ENCODE measurements at regions of chr1 and their contacts with region 1.

Region 1: GRCh38 chr1:111755331-111756123 is at the start of gene DDX20:
- DNase-seq: peak; percentile 92 to 93
- ATAC-seq: peak; percentile 97 to 99 (median 98)
- H3K4me3 ChIP-seq: peak within 1 kb of the TSS; percentile 58 to 90 (median 80)
- H3K27ac ChIP-seq: peak within 1 kb of the TSS; percentile 73 to 96 (median 92)
- H3K4me1 ChIP-seq: peaks cover 0 to 47% (median 21%) of the 10 kb centered on the region in 9 donors
- H3K27me3 ChIP-seq: no peaks in the 10 kb centered on the region
- CTCF ChIP-seq: peak; percentile 81 to 99 (median 95)
- total RNA-seq, gene DDX20: 5.0 to 10.0 (median 6.5) TPM

Region 2: GRCh38 chr1:111489604-111490003 is 265.9 kb before region 1 on chr1:
- intact Hi-C with region 1: loop called in 5 of 10 experiments (anchors 5 to 10 kb)
- DNase-seq: no peak
- ATAC-seq: peak; percentile 23 to 91 (median 68)
- H3K4me3 ChIP-seq: no peak overlapping the region
- H3K27ac ChIP-seq: peak overlapping the region in 3 of 10 donors; percentile 10 to 83 (median 36)
- H3K4me1 ChIP-seq: peaks cover 0 to 62% (median 0%) of the 10 kb centered on the region in 9 donors
- H3K27me3 ChIP-seq: peaks cover 0 to 7% (median 0%) of the 10 kb centered on the region in 7 donors
- CTCF ChIP-seq: no peak

Region 3: DNA sequence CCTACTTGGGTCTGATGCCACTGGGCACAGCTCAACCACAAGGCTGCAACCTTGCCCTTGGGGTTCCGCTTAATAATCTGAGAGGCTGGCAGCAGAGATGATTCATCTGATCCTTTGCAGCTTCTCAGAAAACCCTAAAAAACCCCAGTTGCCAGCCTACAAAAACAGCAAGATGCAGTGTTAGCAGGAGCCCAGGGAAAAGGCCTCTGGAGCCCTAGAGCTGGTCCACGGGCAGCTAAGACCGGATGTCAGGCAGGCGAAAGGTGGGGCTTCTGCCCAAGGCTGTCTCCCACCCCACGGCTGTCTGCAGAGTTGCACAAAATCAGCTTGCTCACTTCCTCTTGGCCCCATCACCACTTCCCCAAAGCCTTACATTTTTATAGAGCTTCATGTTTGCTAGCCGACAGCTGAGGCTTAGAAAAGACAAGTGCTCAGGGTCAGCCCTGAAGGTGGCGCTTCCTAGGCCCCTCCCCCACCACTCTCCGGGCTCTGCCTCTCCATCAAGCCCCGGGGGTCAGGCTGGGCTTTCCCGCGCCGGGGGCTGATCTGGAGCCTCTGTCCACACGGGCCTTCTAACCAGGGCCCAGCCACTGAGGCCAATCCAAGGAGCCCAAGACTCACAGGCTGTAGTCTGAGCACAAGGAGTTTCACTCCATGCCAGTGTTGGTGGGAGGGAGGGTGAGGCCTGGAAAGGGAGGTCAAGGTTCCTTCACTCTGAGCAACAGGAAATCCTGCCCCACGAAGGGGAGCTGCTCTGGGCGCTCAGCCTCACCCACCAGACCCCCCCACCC is 247.9 kb before region 1 on chr1:
- intact Hi-C with region 1: loop called in 6 of 10 experiments (anchors 1 to 10 kb)
- DNase-seq: peak; percentile 73 to 79
- ATAC-seq: peak; percentile 59 to 85 (median 75)
- H3K4me3 ChIP-seq: peak overlapping the region in 9 of 10 donors; percentile 6 to 52 (median 31)
- H3K27ac ChIP-seq: peak overlapping the region; percentile 61 to 99 (median 90)
- H3K4me1 ChIP-seq: peaks cover 20 to 95% (median 48%) of the 10 kb centered on the region in 9 donors
- H3K27me3 ChIP-seq: no peaks in the 10 kb centered on the region
- CTCF ChIP-seq: no peak

Region 4: GRCh38 chr1:111720977-111721786 is 34.3 kb before region 1 on chr1:
- intact Hi-C with region 1: loop called in 3 of 10 experiments (anchors 5 kb)
- DNase-seq: no peak
- ATAC-seq: peak in 4 of 8 donors; percentile 10 to 18 (median 12)
- H3K4me3 ChIP-seq: no peak overlapping the region
- H3K27ac ChIP-seq: peak overlapping the region; percentile 73 to 94 (median 86)
- H3K4me1 ChIP-seq: peaks cover 27 to 69% (median 64%) of the 10 kb centered on the region in 9 donors
- H3K27me3 ChIP-seq: no peaks in the 10 kb centered on the region
- CTCF ChIP-seq: no peak

Region 5: DNA sequence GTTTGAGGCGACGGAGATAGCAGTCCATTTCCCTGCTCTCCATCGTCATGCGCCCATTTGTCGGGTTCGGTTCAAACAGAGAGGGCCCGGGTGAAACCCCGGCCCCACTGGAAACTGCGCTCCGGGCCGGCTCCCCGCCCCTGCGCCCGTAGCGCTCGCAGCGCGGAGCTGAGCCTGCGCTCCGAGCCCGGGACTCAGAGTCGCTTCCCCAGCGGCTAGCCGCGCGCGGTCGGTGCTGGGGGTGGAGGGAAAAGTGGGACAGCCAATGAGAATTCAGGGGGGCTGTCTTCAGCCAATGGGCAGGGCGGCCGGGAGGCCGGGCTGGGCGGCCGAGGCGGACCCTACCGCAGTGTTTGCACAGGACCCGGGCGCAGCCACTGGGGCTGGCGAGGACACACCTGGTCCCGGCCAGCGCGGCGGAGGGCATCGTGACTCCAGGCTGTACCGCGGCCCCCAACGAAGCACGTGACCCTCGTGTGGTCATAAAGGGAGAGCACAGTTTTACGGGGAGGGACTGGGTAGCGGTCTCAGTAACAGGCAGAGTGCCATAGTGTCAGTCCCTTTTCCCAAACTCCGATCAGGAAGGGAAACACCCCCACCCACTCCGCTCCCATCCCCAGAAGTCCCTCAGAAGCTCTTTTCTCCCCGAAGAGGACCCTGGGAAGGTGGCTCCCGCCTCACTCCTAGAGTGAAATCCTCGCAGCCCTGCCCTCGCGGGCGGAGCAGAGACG is 16.2 kb before region 1 on chr1 and contains the start of gene INKA2:
- intact Hi-C with region 1: loop called in 1 of 10 experiments (anchors 1 kb)
- DNase-seq: peak; percentile 94
- ATAC-seq: peak; percentile 84 to 93 (median 89)
- H3K4me3 ChIP-seq: peak within 1 kb of the TSS; percentile 66 to 80 (median 77)
- H3K27ac ChIP-seq: peak within 1 kb of the TSS; percentile 96 to 100 (median 98)
- H3K4me1 ChIP-seq: peaks cover 18 to 72% (median 68%) of the 10 kb centered on the region in 9 donors
- H3K27me3 ChIP-seq: peaks cover 0 to 32% (median 0%) of the 10 kb centered on the region in 7 donors
- CTCF ChIP-seq: peak in 1 of 9 donors; percentile 3
- total RNA-seq, gene INKA2: 8.7 to 34.6 (median 14.8) TPM

Measured in heart right ventricle (tissue), 16 donors.